ENCODE measurements at regions of chr5 and their contacts with region 1.

Region 1: DNA sequence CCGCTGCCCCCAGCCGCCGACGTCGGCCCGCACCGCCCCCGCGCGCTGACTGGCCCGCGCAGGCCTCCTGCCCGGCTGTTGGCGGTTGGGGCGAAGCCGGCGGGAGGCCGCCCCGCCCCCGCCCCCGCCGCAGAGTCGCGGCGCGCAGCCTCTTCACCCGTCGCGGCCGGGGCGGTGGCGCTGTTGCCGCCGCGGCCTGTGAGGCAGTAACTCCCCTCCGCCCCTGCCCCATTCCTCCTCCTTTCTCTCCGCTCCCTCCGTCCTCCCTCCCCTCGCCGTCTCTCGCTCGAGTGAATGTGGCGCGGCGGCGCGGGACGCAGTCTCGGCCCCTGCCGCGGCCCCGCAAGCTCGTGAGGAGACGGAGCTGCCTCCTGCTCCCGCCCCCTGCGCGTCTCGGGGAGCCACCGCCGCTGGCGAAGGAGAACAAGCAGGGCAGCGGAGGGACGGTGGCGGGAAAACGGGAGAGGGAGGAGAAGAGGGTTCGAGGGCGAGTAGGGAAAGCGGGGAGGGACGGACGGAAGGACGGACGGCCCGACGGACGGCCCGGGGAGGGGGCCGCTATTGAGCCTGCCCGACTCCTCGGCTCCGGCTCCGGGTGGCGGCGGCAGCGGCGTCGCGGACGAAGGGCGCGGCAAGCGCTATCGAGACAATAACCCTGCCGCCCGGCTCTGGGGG is 637 bp upstream of the ERBIN start:
- DNase-seq: peak; percentile 74
- ATAC-seq: peak; percentile 86
- H3K4me3 ChIP-seq: peak overlapping the region; percentile 92 to 98 (median 97)
- H3K27ac ChIP-seq: peak overlapping the region; percentile 98
- H3K4me1 ChIP-seq: peaks cover 47% of the 10 kb centered on the region
- H3K27me3 ChIP-seq: no peaks in the 10 kb centered on the region; a peak in 1 of 5 replicates
- CTCF ChIP-seq: peak; percentile 76
- EP300 ChIP-seq: peak in 1 of 2 experiments; percentile 3; a peak in 1 of 4 replicates
- POLR2A ChIP-seq: peak; percentile 79 to 88
- RAD21 ChIP-seq: peak; percentile 31; the same call in 1 of the 2 replicates

Region 2: GRCh38 chr5:65624571-65625555 is 300.9 kb before region 1 on chr5 and contains the starts of genes SHLD3 and TRAPPC13:
- CTCF ChIA-PET with region 1: no interaction called
- POLR2A ChIA-PET with region 1: no interaction called
- in situ Hi-C with region 1: no loop called
- intact Hi-C with region 1: loop called (anchors 10 kb)
- DNase-seq: peak; percentile 88
- ATAC-seq: peak; percentile 84
- H3K4me3 ChIP-seq: peak within 1 kb of the TSS; percentile 90 to 98 (median 95)
- H3K27ac ChIP-seq: peak within 1 kb of the TSS; percentile 95
- H3K4me1 ChIP-seq: peaks cover 28% of the 10 kb centered on the region
- H3K27me3 ChIP-seq: peaks cover 0 to 4% of the 10 kb centered on the region in 2 experiments; a peak in 2 of 5 replicates
- CTCF ChIP-seq: no peak
- EP300 ChIP-seq: no peak
- POLR2A ChIP-seq: peak; percentile 43 to 55
- RAD21 ChIP-seq: no peak
- total RNA-seq, gene SHLD3: 6.8 and 8.1 TPM in 2 replicates
- total RNA-seq, gene TRAPPC13: 19.6 and 24.3 TPM in 2 replicates

Region 3: GRCh38 chr5:65742565-65743231 is 183.0 kb before region 1 on chr5:
- CTCF ChIA-PET with region 1: no interaction called
- POLR2A ChIA-PET with region 1: no interaction called
- in situ Hi-C with region 1: no loop called
- intact Hi-C with region 1: loop called (anchors 5 kb)
- DNase-seq: peak; percentile 40
- ATAC-seq: peak; percentile 66
- H3K4me3 ChIP-seq: no peak overlapping the region
- H3K27ac ChIP-seq: no peak overlapping the region
- H3K4me1 ChIP-seq: no peaks in the 10 kb centered on the region
- H3K27me3 ChIP-seq: no peaks in the 10 kb centered on the region
- CTCF ChIP-seq: peak; percentile 65
- EP300 ChIP-seq: no peak
- POLR2A ChIP-seq: no peak
- RAD21 ChIP-seq: peak; percentile 50

Region 4: DNA sequence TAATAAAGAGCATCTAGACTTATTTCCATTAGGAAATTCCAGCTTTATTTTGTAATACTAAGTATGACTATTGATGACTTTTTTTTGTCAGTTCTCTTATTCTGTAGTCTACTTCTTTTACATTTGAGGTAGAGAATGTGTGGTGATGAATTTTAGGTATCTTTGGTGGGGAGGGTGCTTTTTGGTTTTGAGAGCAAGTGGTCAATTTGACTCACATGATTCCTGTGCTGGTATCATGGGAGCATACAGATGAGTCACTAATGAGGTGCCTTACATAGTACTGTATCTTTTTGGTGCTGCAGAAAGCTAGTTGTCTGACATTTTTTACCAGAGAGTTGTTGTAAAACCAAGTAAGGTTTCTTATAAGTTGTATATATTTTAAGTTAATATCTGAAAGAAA is 35.9 kb after region 1 on chr5:
- CTCF ChIA-PET with region 1: no interaction called
- POLR2A ChIA-PET with region 1: no interaction called
- in situ Hi-C with region 1: no loop called
- intact Hi-C with region 1: loop called (anchors 5 kb)
- DNase-seq: no peak
- ATAC-seq: no peak
- H3K4me3 ChIP-seq: no peak overlapping the region
- H3K27ac ChIP-seq: no peak overlapping the region
- H3K4me1 ChIP-seq: no peaks in the 10 kb centered on the region
- H3K27me3 ChIP-seq: no peaks in the 10 kb centered on the region
- CTCF ChIP-seq: no peak
- EP300 ChIP-seq: no peak
- POLR2A ChIP-seq: no peak
- RAD21 ChIP-seq: no peak

Region 5: GRCh38 chr5:65984098-65984885 is 58.6 kb after region 1 on chr5:
- CTCF ChIA-PET with region 1: no interaction called
- POLR2A ChIA-PET with region 1: no interaction called
- in situ Hi-C with region 1: no loop called
- intact Hi-C with region 1: loop called (anchors 5 kb)
- DNase-seq: no peak
- ATAC-seq: peak; percentile 22; the same call in 2 of the 3 replicates
- H3K4me3 ChIP-seq: no peak overlapping the region
- H3K27ac ChIP-seq: no peak overlapping the region
- H3K4me1 ChIP-seq: peaks cover 19% of the 10 kb centered on the region
- H3K27me3 ChIP-seq: no peaks in the 10 kb centered on the region
- CTCF ChIP-seq: no peak
- EP300 ChIP-seq: no peak
- POLR2A ChIP-seq: no peak
- RAD21 ChIP-seq: no peak

Region 6: GRCh38 chr5:66144074-66144833 is 218.5 kb after region 1 on chr5 and contains the start of gene SREK1:
- CTCF ChIA-PET with region 1: no interaction called
- POLR2A ChIA-PET with region 1: interaction called, 4 read pairs
- in situ Hi-C with region 1: no loop called
- intact Hi-C with region 1: loop called (anchors 5 kb)
- DNase-seq: peak; percentile 82
- ATAC-seq: peak; percentile 95
- H3K4me3 ChIP-seq: peak within 1 kb of the TSS; percentile 82 to 92 (median 90)
- H3K27ac ChIP-seq: peak within 1 kb of the TSS; percentile 98
- H3K4me1 ChIP-seq: peaks cover 27% of the 10 kb centered on the region
- H3K27me3 ChIP-seq: no peaks in the 10 kb centered on the region; a peak in 1 of 5 replicates
- CTCF ChIP-seq: no peak
- EP300 ChIP-seq: no peak
- POLR2A ChIP-seq: peak; percentile 83 to 89
- RAD21 ChIP-seq: peak; percentile 53; the same call in 1 of the 2 replicates
- total RNA-seq, gene SREK1: 46.5 and 90.9 TPM in 2 replicates

Measured in HepG2 (cell line).